MCF 10A (cell line): ENCODE measurements at regions of chr5 and their contacts with region 1.

Region 1: GRCh38 chr5:95781101-95781583 is 41.4 kb downstream of the GLRX start:
- DNase-seq: peak; percentile 85
- H3K4me3 Mint-ChIP-seq: no peak overlapping the region
- H3K27ac Mint-ChIP-seq: peak overlapping the region; percentile 64
- H3K4me1 Mint-ChIP-seq: no peaks in the 10 kb centered on the region
- H3K27me3 Mint-ChIP-seq: no peaks in the 10 kb centered on the region
- CTCF ChIP-seq: peak; percentile 89

Region 2: DNA sequence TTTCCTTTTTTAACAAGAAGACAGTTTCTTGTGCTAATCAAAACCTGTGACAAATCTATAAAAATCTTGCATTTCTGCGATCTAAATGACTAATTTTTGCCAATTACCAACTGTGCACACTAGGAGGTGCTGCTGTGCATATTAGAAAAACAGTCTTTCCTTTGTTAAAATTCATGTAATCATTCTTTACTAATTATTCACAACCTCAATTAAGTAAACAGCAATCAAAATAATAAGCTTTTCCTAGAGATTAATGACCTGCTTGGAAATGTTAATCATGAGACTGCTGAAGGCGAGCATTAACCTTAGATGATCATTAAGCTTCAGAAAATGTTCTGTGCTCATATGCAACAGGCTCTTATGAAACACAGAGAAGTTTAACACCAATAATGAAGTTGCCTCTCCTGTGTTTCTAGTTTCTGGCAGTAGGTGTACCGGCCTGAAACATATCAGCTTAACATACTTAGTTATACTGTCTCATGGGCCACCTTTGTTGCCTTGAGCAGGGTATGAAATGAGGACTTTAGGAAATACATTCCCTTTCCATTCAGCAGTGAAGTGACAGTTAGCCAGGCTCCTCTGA is 116.8 kb before region 1 on chr5:
- CTCF ChIA-PET with region 1: interaction called, 119 read pairs
- POLR2A ChIA-PET with region 1: interaction called, 6 read pairs
- intact Hi-C with region 1: loop called (anchors 1 kb)
- DNase-seq: peak; percentile 46
- H3K4me3 Mint-ChIP-seq: no peak overlapping the region
- H3K27ac Mint-ChIP-seq: no peak overlapping the region
- H3K4me1 Mint-ChIP-seq: no peaks in the 10 kb centered on the region
- H3K27me3 Mint-ChIP-seq: no peaks in the 10 kb centered on the region
- CTCF ChIP-seq: peak; percentile 56

Region 3: GRCh38 chr5:95730730-95731570 is 50.2 kb before region 1 on chr5 and contains the start of gene RHOBTB3:
- CTCF ChIA-PET with region 1: interaction called, 16 read pairs
- POLR2A ChIA-PET with region 1: interaction called, 4 read pairs
- intact Hi-C with region 1: no loop called
- DNase-seq: peak; percentile 61
- H3K4me3 Mint-ChIP-seq: peak within 1 kb of the TSS; percentile 73
- H3K27ac Mint-ChIP-seq: no peak within 1 kb of the TSS
- H3K4me1 Mint-ChIP-seq: no peaks in the 10 kb centered on the region
- H3K27me3 Mint-ChIP-seq: no peaks in the 10 kb centered on the region
- CTCF ChIP-seq: no peak
- total RNA-seq, gene RHOBTB3: 3.4 and 3.8 TPM in 2 replicates

Region 4: DNA sequence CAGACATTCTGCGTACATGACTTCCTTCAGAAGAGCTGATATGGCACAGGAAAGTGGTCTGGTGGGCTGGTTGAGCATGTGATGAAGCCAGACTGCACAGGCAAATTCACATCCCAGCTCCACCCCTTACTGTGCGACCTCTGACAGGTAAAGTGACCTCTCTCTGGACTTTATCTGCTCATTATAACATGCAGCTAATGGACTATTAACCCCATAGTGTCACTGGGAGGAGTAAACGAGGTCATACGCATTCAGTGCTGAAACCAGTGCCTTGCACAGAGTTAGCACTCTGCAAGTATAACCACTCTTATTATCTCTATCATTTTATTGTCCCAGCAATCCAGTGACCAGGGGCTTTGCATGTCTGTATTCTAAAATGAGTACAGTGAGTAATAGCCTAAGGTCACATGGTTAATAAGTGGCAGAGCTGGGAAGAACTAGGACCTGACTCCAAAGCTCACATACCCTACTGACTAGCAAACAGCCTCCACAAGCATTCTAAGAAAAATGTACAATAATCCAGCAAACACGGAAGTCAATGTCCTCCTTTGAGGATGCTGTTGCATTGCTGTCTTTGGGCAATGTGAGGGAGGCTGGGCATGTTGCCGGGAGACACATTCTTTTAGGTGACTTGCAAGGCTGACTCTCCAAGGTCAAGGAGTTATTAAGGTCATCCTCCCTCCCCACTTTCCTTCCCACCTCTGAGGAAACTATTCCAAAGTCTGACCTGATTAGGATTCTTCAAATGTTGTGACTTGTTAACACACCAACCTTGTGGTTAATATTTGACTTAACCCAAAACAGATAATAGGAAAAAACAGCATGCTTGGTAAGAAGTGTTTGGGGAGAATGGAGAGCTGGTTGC is 22.4 kb after region 1 on chr5:
- CTCF ChIA-PET with region 1: interaction called, 19 read pairs
- POLR2A ChIA-PET with region 1: no interaction called
- intact Hi-C with region 1: no loop called
- DNase-seq: no peak
- H3K4me3 Mint-ChIP-seq: no peak overlapping the region
- H3K27ac Mint-ChIP-seq: no peak overlapping the region
- H3K4me1 Mint-ChIP-seq: no peaks in the 10 kb centered on the region
- H3K27me3 Mint-ChIP-seq: no peaks in the 10 kb centered on the region
- CTCF ChIP-seq: no peak

Region 5: DNA sequence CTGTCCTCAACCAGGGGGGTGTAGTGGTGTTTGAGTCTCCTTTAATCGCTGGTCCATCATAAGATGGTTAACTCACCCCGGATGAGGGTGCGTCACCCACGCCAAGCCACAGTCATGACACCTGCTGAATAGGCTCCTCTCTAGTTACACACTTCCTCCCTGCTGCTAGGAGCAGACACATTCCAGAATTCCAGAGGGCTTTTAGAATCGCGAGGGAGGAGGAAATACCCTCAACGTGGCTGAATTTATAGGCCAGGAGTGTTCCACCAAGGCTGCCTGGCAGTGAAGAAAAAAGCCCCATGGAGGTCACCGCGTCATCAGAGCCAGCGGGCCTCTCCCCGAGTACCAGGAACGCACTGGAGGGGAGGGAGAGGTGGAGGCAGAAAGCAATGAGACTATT is 36.3 kb after region 1 on chr5:
- CTCF ChIA-PET with region 1: interaction called, 48 read pairs
- POLR2A ChIA-PET with region 1: interaction called, 28 read pairs
- intact Hi-C with region 1: loop called (anchors 1 kb)
- DNase-seq: no peak
- H3K4me3 Mint-ChIP-seq: no peak overlapping the region
- H3K27ac Mint-ChIP-seq: no peak overlapping the region
- H3K4me1 Mint-ChIP-seq: peaks cover 24% of the 10 kb centered on the region
- H3K27me3 Mint-ChIP-seq: no peaks in the 10 kb centered on the region
- CTCF ChIP-seq: no peak

Region 6: GRCh38 chr5:95939465-95939864 is 158.3 kb after region 1 on chr5:
- CTCF ChIA-PET with region 1: no interaction called
- POLR2A ChIA-PET with region 1: no interaction called
- intact Hi-C with region 1: no loop called
- DNase-seq: no peak
- H3K4me3 Mint-ChIP-seq: no peak overlapping the region
- H3K27ac Mint-ChIP-seq: no peak overlapping the region
- H3K4me1 Mint-ChIP-seq: peaks cover 15% of the 10 kb centered on the region
- H3K27me3 Mint-ChIP-seq: no peaks in the 10 kb centered on the region
- CTCF ChIP-seq: no peak